ENCODE measurements at regions of chr17 and their contacts with region 1.

Region 1: GRCh38 chr17:59093702-59094231 is 12.9 kb downstream of the TRIM37 start:
- DNase-seq: peak; percentile 64
- H3K27ac ChIP-seq: peak overlapping the region; percentile 77
- CTCF ChIP-seq: no peak

Region 2: DNA sequence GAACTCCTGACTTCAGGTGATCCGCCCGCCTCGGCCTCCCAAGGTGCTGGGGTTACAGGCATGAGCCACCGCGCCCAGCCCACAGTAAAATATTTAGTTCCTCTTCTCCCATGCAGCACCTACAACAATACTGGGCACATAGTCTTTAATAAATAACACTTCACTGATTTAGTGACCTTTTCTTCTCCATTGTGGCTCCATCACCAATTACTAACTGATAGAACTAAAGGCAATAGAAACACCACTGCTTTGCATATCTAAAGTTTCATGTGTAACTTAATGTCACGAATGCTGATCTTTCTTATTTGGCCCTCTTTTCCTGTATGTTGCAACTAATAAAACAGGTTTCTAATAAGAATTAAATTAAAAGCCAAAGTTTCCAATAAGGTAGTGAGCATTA is 26.0 kb before region 1 on chr17:
- CTCF ChIA-PET with region 1: no interaction called
- POLR2A ChIA-PET with region 1: interaction called, 10 read pairs
- DNase-seq: no peak
- H3K27ac ChIP-seq: no peak overlapping the region
- CTCF ChIP-seq: no peak

Region 3: DNA sequence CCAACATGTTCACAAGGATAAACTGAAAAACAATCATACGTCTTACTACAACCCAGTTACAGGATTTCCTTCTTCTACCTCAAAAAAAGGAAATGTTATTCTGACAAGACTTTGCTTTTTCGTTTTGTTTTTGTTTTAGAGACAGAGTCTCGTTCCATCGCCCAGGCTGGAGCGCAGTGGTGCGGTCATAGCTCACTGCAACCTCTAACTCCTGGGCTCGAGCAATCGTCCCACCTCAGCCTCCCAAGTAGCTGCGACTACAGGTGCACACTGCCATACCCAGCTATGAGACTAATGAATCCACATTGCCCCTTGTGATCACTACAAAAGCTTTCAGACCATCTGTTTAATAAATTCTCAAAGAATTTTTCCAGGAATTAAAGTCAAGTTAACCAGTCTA is 21.7 kb after region 1 on chr17:
- CTCF ChIA-PET with region 1: no interaction called
- POLR2A ChIA-PET with region 1: interaction called, 16 read pairs
- DNase-seq: no peak
- H3K27ac ChIP-seq: no peak overlapping the region
- CTCF ChIP-seq: no peak

Region 4: GRCh38 chr17:59165902-59166342 is 72.2 kb after region 1 on chr17:
- CTCF ChIA-PET with region 1: no interaction called
- POLR2A ChIA-PET with region 1: no interaction called
- DNase-seq: peak; percentile 57
- H3K27ac ChIP-seq: no peak overlapping the region
- CTCF ChIP-seq: peak; percentile 88

Measured in RWPE1 (cell line).